MCF 10A (cell line): ENCODE measurements at regions of chr11 and their contacts with region 1.

Region 1: DNA sequence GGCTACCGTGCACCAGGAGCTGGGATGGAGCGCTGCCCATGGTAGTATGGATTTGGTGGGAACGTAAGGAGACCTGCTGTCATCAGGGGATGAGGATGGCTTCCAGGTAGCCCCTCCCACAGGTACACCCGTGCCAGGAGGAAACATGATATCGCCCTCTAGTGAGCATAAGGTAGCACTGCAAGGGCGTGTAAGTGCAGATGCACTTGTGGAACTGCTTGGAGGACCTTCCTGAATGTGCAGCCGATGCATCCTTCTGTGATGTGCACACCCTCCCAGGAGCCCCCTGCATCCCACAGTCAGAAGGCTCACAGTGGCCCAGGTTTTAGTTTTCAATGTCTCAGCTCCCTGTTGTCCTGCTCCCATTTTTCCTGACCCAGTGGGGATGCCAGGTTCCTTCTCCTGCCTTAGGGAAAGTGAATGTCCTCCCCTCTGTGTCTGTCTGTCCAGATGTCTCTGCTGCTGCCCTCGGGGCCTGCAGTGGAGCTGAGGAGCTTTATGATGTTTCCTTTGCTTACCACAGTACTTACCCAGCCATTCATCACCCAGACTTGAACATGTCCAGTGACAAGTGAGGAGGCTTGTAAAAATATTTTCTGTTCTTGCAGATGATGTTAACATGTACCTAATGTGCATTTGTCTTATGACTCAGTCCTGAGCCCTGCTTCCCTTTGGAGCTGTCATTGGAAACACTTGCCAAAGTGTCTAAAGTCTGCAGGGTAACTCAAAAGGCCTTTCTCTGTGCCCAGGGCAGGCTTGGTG is 49.2 kb downstream of the DBX1 start:
- DNase-seq: peak; percentile 82
- H3K4me3 Mint-ChIP-seq: peak overlapping the region; percentile 57
- H3K27ac Mint-ChIP-seq: peak overlapping the region; percentile 64
- H3K4me1 Mint-ChIP-seq: peaks cover 50% of the 10 kb centered on the region
- H3K27me3 Mint-ChIP-seq: no peaks in the 10 kb centered on the region
- CTCF ChIP-seq: peak; percentile 89

Region 2: DNA sequence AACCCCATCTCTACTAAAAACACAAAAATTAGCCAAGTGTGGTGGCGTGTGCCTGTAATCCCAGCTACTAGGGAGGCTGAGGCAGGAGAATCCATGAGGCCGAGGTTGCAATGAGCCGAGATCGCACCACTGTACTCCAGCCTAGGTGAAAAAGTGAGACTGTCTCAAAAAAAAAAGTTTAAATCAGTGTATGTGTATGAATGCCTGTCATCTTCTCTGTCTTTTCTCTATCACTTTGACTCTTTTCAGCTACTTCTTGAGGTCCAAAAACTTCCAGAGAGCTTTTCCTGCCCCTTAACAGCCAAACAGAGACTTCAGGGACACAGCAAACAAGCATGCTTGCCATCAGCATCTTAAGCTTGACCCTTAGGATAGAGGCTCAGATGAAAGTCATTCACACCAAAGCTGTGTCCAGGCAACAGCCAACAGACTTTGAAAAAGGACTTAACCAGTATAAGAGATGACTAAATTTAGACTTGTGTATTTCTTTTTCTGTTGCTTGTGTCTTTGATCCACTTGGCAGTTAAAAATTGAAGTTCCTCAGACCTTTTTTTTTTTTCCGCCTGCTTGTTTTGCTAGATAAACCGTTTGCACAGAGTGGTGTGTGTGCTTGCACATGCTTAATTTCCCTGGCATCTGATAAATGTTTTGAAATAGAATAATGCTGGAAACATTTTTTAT is 102.8 kb before region 1 on chr11:
- CTCF ChIA-PET with region 1: interaction called, 16 read pairs
- POLR2A ChIA-PET with region 1: interaction called, 27 read pairs
- intact Hi-C with region 1: no loop called
- DNase-seq: no peak
- H3K4me3 Mint-ChIP-seq: no peak overlapping the region
- H3K27ac Mint-ChIP-seq: no peak overlapping the region
- H3K4me1 Mint-ChIP-seq: peaks cover 24% of the 10 kb centered on the region
- H3K27me3 Mint-ChIP-seq: no peaks in the 10 kb centered on the region
- CTCF ChIP-seq: no peak

Region 3: DNA sequence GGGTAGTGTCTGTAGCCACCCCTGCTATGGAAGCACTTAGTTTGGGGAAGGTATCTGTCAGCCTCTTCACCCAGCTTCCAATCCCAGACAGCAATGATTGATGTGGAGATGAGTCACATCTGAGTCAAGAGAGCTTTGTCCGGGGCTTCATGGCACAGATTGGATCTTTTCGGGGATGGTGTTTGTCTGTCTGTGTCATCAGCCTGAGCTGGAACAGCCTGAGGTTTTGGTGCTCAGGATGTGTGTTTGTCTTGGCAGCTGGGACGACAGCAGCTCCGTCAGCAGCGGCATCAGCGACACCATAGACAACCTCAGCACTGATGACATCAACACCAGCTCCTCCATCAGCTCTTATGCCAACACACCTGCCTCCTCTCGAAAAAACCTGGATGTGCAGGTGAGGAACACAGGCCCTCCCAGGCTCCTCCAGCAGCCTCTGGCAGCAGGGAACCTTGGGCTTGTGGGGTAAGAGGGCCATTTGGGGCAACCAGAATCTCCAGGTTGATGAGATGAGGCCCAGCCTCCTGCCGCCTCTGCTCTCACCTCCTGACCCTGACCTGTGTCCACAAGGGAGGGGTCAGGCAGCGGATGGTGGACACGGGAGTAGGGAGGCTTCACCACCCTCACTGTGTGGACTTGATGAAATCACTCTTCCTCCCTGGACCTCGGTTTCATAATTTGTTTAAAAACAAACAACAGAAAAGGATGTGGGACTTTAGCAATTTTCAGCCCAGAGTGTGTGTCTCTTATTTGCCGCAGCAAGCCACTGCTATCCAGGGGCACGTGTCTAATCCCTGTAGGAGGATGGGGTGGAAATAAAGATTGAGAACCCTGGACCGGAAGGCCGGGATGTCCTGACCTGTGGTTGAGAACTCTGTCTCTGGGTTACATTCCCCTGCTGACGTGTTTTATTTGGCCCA is 75.1 kb before region 1 on chr11:
- CTCF ChIA-PET with region 1: interaction called, 16 read pairs
- POLR2A ChIA-PET with region 1: interaction called, 8 read pairs
- intact Hi-C with region 1: loop called (anchors 5 kb)
- DNase-seq: peak; percentile 99
- H3K4me3 Mint-ChIP-seq: peak overlapping the region; percentile 59
- H3K27ac Mint-ChIP-seq: peak overlapping the region; percentile 92
- H3K4me1 Mint-ChIP-seq: peaks cover 66% of the 10 kb centered on the region
- H3K27me3 Mint-ChIP-seq: no peaks in the 10 kb centered on the region
- CTCF ChIP-seq: no peak

Region 4: DNA sequence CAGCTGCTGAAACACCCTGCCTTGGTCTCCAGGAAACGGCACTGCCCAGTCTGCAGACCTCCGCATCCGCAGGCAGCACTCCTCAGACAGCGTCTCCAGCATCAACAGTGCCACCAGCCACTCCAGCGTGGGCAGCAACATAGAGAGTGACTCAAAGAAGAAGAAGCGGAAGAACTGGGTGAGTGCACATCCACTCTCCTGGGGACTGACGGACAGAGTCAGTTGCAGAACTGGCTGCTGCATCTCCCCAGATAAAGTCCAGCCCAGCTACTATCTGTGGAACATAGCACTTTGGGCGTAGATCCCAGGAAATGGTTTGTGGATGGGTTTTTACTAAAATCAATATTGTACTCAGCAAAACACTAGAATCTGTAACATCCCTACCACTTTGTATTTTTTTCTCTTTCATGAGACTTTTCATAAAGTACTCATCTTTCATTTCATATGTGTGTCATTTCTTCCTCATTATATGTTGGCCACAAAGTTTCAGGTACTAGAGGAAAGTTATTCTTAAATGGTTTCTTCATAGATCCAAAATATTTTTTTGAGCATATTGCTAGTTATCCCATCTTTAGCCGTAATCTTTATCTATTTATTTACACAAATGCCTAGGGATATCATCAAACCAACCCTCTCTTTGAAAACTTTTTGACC is 30.9 kb before region 1 on chr11:
- CTCF ChIA-PET with region 1: interaction called, 22 read pairs
- POLR2A ChIA-PET with region 1: interaction called, 9 read pairs
- intact Hi-C with region 1: no loop called
- DNase-seq: no peak
- H3K4me3 Mint-ChIP-seq: no peak overlapping the region
- H3K27ac Mint-ChIP-seq: peak overlapping the region; percentile 9
- H3K4me1 Mint-ChIP-seq: peaks cover 6% of the 10 kb centered on the region
- H3K27me3 Mint-ChIP-seq: no peaks in the 10 kb centered on the region
- CTCF ChIP-seq: no peak

Region 5: GRCh38 chr11:20253796-20254195 is 142.7 kb after region 1 on chr11:
- CTCF ChIA-PET with region 1: no interaction called
- POLR2A ChIA-PET with region 1: no interaction called
- intact Hi-C with region 1: no loop called
- DNase-seq: no peak
- H3K4me3 Mint-ChIP-seq: no peak overlapping the region
- H3K27ac Mint-ChIP-seq: no peak overlapping the region
- H3K4me1 Mint-ChIP-seq: no peaks in the 10 kb centered on the region
- H3K27me3 Mint-ChIP-seq: peaks cover 100% of the 10 kb centered on the region
- CTCF ChIP-seq: no peak

Region 6: GRCh38 chr11:20355221-20356219 is 244.4 kb after region 1 on chr11:
- CTCF ChIA-PET with region 1: interaction called, 40 read pairs
- POLR2A ChIA-PET with region 1: interaction called, 3 read pairs
- intact Hi-C with region 1: no loop called
- DNase-seq: peak; percentile 65
- H3K4me3 Mint-ChIP-seq: no peak overlapping the region
- H3K27ac Mint-ChIP-seq: no peak overlapping the region
- H3K4me1 Mint-ChIP-seq: peaks cover 17% of the 10 kb centered on the region
- H3K27me3 Mint-ChIP-seq: no peaks in the 10 kb centered on the region
- CTCF ChIP-seq: peak; percentile 69